ENCODE measurements at regions of chr5 and their contacts with region 1.

Region 1: DNA sequence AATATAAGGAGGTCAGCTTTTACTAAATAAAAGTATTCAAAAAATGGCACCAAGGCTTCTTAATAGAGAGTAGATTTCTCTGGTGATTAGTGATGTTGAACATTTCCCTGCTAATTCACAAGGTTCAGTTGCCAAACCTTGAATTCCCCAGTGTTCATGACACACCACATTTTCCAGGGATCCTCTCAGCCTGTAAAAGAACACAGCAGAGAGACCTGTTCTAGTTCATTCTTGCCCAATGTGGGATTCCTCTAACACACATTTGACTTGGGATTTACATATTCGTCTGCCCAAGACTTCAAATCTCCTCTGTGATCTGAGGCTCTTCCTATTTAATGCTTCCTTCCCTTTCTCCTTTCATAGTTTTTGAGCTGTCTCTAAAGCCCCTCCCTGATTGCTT is 273.2 kb upstream of the CDH9 start:
- DNase-seq: peak; percentile 77
- H3K4me3 ChIP-seq: no peak overlapping the region
- H3K27ac ChIP-seq: peak overlapping the region; percentile 14
- H3K4me1 ChIP-seq: peaks cover 17% of the 10 kb centered on the region
- H3K27me3 ChIP-seq: no peaks in the 10 kb centered on the region
- CTCF ChIP-seq: no peak

Region 2: DNA sequence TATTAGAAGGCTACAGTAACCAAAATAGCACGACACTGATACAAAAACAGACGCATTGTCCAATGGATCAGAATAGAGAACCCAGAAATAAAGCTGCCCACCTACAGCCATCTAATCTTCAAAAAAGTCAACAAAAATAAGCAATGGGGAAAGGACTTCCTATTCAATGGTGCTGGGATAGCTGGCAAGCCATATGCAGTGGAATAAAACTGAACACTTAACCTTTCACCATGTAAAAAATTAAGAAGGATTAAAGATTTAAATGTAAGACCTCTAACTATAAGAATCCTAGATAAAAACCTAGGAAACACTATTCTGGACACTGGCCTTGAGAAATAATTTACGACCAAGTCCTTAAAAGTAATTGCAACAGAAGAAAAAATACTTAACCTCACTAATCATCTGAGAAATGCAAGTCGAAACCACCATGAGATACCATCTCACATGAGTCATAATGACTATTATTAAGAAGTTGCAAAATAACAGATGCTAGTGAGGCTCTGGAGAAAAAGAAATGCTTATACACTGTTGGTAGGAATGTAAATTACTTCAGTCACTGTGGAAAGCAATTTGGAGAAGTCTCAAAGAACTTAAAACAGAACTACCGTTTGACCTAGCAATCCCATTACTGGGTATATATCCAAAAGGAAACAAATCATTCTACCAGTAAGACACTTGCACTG is 69.8 kb before region 1 on chr5:
- CTCF ChIA-PET with region 1: no interaction called
- dilution Hi-C with region 1: no loop called
- in situ Hi-C with region 1: no loop called
- intact Hi-C with region 1: loop called (anchors 5 kb)
- DNase-seq: peak; percentile 95
- H3K4me3 ChIP-seq: no peak overlapping the region
- H3K27ac ChIP-seq: peak overlapping the region; percentile 84
- H3K4me1 ChIP-seq: peaks cover 27% of the 10 kb centered on the region
- H3K27me3 ChIP-seq: no peaks in the 10 kb centered on the region
- CTCF ChIP-seq: peak; percentile 28 to 48

Measured in mammary epithelial cell (primary cell).